Sciatic nerve (tissue), 2 donors: ENCODE measurements at regions of chr19 and their contacts with region 1.

Region 1: GRCh38 chr19:55503502-55504251 is 15.4 kb downstream of the SSC5D start:
- DNase-seq: peak; percentile 97
- ATAC-seq: peak; percentile 98

Region 2: DNA sequence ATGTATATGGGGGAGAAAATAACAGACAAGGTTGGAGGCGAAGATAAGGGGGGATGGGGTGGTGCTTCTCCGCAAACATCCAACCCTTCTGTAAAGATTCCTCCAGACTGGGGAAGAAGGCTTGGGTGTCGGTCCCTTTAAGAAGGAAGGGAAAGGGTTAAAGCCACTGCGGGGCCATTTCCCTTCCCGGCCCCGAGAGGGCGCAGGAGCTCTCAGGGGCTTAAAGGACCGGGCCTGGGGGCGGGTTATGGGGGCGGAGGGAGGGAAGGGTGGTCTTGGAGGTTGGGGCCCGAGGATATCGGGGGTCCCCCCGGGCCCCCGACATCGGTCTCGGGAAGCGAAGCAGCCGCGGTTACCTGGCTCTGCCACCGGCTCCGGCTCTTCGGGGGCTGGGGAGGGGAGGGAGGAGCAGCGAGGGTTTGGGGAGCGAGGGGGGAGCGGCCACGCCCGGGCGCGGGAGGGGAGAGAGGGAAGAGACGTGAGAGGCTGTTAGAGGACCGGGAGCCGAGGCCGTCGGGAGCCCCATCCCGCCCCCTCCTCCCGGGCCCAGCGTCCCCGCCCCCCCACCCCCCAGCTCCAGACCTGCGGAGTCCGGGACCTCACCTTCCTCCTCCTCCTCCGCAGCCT is 357.5 kb before region 1 on chr19:
- intact Hi-C with region 1: loop called (anchors 5 kb)
- DNase-seq: no peak
- ATAC-seq: no peak

Region 3: DNA sequence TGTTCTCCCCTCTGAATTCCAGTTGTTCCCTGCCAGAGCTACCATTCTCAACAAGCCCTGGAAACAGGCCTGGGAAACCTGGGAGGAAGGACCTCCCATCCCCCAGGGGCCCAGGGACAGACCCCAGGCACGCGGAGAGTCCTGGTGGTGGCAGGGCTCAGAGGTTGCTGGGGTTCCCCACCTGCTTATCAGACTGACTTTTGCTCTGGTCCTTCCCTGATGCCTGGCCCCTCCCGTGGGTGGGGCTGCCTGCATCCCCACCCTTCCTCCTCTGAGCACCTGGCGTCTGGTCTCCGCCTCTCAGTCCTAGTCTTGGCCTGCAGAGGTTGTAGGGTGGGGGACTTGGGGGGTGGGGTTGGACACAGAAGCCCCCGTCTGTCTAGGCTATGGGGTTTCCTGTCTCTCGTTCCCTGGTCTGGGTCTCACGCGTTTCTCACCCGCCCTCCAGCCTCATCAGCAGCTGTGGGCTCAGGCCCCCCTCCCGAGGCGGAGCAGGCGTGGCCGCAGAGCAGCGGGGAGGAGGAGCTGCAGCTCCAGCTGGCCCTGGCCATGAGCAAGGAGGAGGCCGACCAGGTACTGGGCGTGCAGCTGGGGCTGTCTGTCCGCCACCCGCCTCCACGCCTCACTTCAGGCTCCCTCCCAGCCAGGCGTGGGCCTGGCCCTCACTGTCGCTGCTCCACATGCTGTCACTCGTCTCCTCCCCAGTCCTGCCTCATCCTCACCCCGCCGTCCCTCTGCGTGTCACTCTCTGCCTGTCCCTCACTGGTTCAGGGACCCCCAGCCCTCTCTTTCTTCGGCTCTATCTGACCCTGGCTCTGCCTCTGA is 185.0 kb after region 1 on chr19:
- intact Hi-C with region 1: no loop called
- DNase-seq: no peak
- ATAC-seq: no peak